ENCODE measurements at regions of chr2 and their contacts with region 1.

Region 1: DNA sequence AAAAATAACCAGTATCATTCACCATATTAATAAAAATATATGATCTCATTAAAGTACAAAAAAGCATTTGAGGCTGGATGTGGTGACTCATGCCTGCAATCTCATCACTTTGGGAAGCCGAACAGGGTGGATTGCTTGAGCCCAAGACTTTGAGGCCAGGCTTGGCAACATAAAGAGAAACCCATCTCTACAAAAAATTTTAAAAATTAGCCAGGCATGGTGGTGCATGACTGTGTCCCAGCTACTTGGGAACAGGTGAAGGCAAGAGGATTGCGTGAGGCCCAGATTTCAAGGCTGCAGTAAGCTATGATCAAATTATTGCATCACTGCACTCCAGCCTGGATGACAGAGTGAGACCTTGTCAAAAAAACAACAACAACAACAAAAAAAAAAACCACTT is 75.9 kb downstream of the RAD51AP2 start:
- DNase-seq: peak in 1 of 2 experiments; percentile 61
- H3K4me3 ChIP-seq: peak overlapping the region; percentile 38; the same call in 1 of the 2 replicates
- H3K27ac ChIP-seq: peak overlapping the region; percentile 90
- H3K4me1 ChIP-seq: peaks cover 37% of the 10 kb centered on the region
- H3K27me3 ChIP-seq: no peaks in the 10 kb centered on the region
- CTCF ChIP-seq: no peak

Region 2: GRCh38 chr2:17303054-17303453 is 139.3 kb before region 1 on chr2:
- CTCF ChIA-PET with region 1: no interaction called
- POLR2A ChIA-PET with region 1: interaction called, 17 read pairs
- intact Hi-C with region 1: no loop called
- DNase-seq: peak; percentile 35 to 99
- H3K4me3 ChIP-seq: peak overlapping the region; percentile 29; the same call in 1 of the 2 replicates
- H3K27ac ChIP-seq: peak overlapping the region; percentile 82
- H3K4me1 ChIP-seq: peaks cover 74% of the 10 kb centered on the region
- H3K27me3 ChIP-seq: no peaks in the 10 kb centered on the region
- CTCF ChIP-seq: no peak

Measured in PC-9 (cell line).